ENCODE measurements at regions of chrX and their contacts with region 1.

Region 1: GRCh38 chrX:37825209-37825842 is 22.0 kb downstream of the DYNLT3 start:
- DNase-seq: peak; percentile 8
- ATAC-seq: peak; percentile 39; the same call in 1 of the 3 replicates
- H3K4me3 ChIP-seq: no peak overlapping the region
- H3K27ac ChIP-seq: no peak overlapping the region
- H3K4me1 ChIP-seq: no peaks in the 10 kb centered on the region; the same call in 1 of the 2 replicates
- H3K27me3 ChIP-seq: no peaks in the 10 kb centered on the region
- CTCF ChIP-seq: peak; percentile 64
- EP300 ChIP-seq: no peak
- POLR2A ChIP-seq: no peak
- RAD21 ChIP-seq: 0 out of 2 replicates have a peak, but pooled peaks have one; percentile 14

Region 2: DNA sequence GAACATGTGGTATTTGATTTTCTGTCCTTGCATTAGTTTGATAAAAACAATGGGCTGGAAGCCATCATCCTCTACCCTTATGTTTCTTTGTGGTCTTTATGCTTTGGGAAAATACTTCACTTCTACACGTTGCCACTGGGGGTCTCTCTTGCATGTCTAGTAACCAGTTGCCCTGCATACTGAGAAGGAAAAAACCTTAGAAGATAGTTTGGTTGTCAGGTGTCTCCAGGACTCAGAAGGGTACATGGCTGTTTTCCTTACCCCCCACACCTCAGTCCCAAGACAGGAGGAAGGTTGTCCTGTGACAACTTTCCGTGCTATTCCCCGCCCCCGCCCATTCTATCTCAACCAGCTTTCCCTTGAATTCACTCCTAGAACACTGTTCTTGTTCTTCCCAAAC is 316.0 kb before region 1 on chrX:
- CTCF ChIA-PET with region 1: no interaction called
- POLR2A ChIA-PET with region 1: no interaction called
- in situ Hi-C with region 1: no loop called
- intact Hi-C with region 1: loop called (anchors 10 kb)
- DNase-seq: no peak
- ATAC-seq: peak; percentile 61; the same call in 2 of the 3 replicates
- H3K4me3 ChIP-seq: no peak overlapping the region
- H3K27ac ChIP-seq: no peak overlapping the region
- H3K4me1 ChIP-seq: no peaks in the 10 kb centered on the region
- H3K27me3 ChIP-seq: no peaks in the 10 kb centered on the region
- CTCF ChIP-seq: peak; percentile 54
- EP300 ChIP-seq: no peak
- POLR2A ChIP-seq: no peak
- RAD21 ChIP-seq: no peak

Region 3: GRCh38 chrX:37745354-37745753 is 80.0 kb before region 1 on chrX:
- CTCF ChIA-PET with region 1: interaction called, 4 read pairs
- POLR2A ChIA-PET with region 1: no interaction called
- in situ Hi-C with region 1: no loop called
- intact Hi-C with region 1: loop called (anchors 1 kb)
- DNase-seq: peak; percentile 35
- ATAC-seq: peak; percentile 83
- H3K4me3 ChIP-seq: no peak overlapping the region
- H3K27ac ChIP-seq: no peak overlapping the region
- H3K4me1 ChIP-seq: no peaks in the 10 kb centered on the region
- H3K27me3 ChIP-seq: no peaks in the 10 kb centered on the region
- CTCF ChIP-seq: peak; percentile 75
- EP300 ChIP-seq: no peak
- POLR2A ChIP-seq: no peak
- RAD21 ChIP-seq: peak; percentile 35; the same call in 1 of the 2 replicates

Region 4: DNA sequence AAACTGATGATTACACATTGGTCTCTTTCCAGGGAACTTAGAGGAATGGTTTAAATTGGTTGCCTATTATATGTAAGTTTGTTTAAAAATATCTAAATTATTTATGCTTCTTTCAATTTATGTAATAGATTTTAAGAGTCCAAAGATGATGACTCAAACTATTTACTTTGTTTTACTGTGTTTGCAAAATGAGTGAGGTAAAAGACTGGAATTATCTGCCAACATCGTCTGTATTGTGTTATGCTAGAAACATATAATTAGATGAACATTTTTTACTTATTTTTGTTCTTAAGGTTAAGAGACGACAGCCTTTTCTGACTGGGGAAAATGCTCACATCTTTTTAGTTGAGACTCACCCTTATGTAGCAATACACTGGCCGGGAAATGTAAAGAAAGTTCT is 129.9 kb after region 1 on chrX:
- CTCF ChIA-PET with region 1: no interaction called
- POLR2A ChIA-PET with region 1: no interaction called
- in situ Hi-C with region 1: no loop called
- intact Hi-C with region 1: no loop called
- DNase-seq: no peak
- ATAC-seq: no peak
- H3K4me3 ChIP-seq: no peak overlapping the region
- H3K27ac ChIP-seq: no peak overlapping the region
- H3K4me1 ChIP-seq: peaks cover 38% of the 10 kb centered on the region
- H3K27me3 ChIP-seq: no peaks in the 10 kb centered on the region
- CTCF ChIP-seq: no peak
- EP300 ChIP-seq: no peak
- POLR2A ChIP-seq: no peak
- RAD21 ChIP-seq: no peak

Region 5: DNA sequence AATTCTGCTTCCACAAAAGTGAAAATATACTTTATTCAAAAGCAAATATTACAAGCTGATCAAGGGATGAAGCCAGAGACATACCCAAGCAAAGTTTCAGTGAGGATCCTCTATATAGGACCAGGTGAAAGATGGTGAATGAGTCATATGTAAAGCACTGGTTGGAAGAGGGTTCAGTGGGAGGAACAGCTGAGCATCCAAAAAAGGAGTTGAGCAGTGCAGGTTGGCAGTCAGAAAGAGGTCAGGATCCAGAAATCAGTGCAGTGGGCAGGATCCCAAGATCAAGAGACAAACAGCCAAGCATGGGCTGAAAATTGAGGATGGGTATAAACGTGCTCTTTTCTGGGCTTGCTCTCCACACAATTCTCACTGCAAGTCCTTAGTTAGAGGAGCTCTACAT is 557.3 kb after region 1 on chrX:
- CTCF ChIA-PET with region 1: no interaction called
- POLR2A ChIA-PET with region 1: no interaction called
- in situ Hi-C with region 1: no loop called
- intact Hi-C with region 1: no loop called
- DNase-seq: no peak
- ATAC-seq: no peak
- H3K4me3 ChIP-seq: no peak overlapping the region
- H3K27ac ChIP-seq: no peak overlapping the region
- H3K4me1 ChIP-seq: peaks cover 6% of the 10 kb centered on the region; the same call in 1 of the 2 replicates
- H3K27me3 ChIP-seq: no peaks in the 10 kb centered on the region
- CTCF ChIP-seq: no peak
- EP300 ChIP-seq: no peak
- POLR2A ChIP-seq: no peak
- RAD21 ChIP-seq: no peak